ENCODE measurements at regions of chr20 and their contacts with region 1.

Region 1: GRCh38 chr20:20824924-20825584 is 112.6 kb upstream of the RALGAPA2 start:
- DNase-seq: peak; percentile 58
- ATAC-seq: peak; percentile 74
- H3K4me3 Mint-ChIP-seq: no peak overlapping the region
- H3K27ac Mint-ChIP-seq: no peak overlapping the region
- H3K4me1 Mint-ChIP-seq: peaks cover 2% of the 10 kb centered on the region
- H3K27me3 Mint-ChIP-seq: peaks cover 14% of the 10 kb centered on the region
- CTCF ChIP-seq: peak; percentile 83

Region 2: GRCh38 chr20:20582734-20583133 is 242.3 kb before region 1 on chr20:
- CTCF ChIA-PET with region 1: no interaction called
- POLR2A ChIA-PET with region 1: no interaction called
- intact Hi-C with region 1: no loop called
- DNase-seq: no peak
- ATAC-seq: no peak
- H3K4me3 Mint-ChIP-seq: no peak overlapping the region
- H3K27ac Mint-ChIP-seq: no peak overlapping the region
- H3K4me1 Mint-ChIP-seq: peaks cover 4% of the 10 kb centered on the region
- H3K27me3 Mint-ChIP-seq: no peaks in the 10 kb centered on the region
- CTCF ChIP-seq: no peak

Region 3: GRCh38 chr20:20658871-20659431 is 166.1 kb before region 1 on chr20:
- CTCF ChIA-PET with region 1: interaction called, 16 read pairs
- POLR2A ChIA-PET with region 1: no interaction called
- intact Hi-C with region 1: no loop called
- DNase-seq: no peak
- ATAC-seq: no peak
- H3K4me3 Mint-ChIP-seq: no peak overlapping the region
- H3K27ac Mint-ChIP-seq: no peak overlapping the region
- H3K4me1 Mint-ChIP-seq: no peaks in the 10 kb centered on the region
- H3K27me3 Mint-ChIP-seq: no peaks in the 10 kb centered on the region
- CTCF ChIP-seq: no peak

Region 4: GRCh38 chr20:20664795-20665589 is 160.1 kb before region 1 on chr20:
- CTCF ChIA-PET with region 1: interaction called, 16 read pairs
- POLR2A ChIA-PET with region 1: no interaction called
- intact Hi-C with region 1: loop called (anchors 5 kb)
- DNase-seq: peak; percentile 4
- ATAC-seq: peak; percentile 67
- H3K4me3 Mint-ChIP-seq: no peak overlapping the region
- H3K27ac Mint-ChIP-seq: no peak overlapping the region
- H3K4me1 Mint-ChIP-seq: peaks cover 17% of the 10 kb centered on the region
- H3K27me3 Mint-ChIP-seq: no peaks in the 10 kb centered on the region
- CTCF ChIP-seq: peak; percentile 47

Region 5: GRCh38 chr20:20759132-20759531 is 65.9 kb before region 1 on chr20:
- CTCF ChIA-PET with region 1: no interaction called
- POLR2A ChIA-PET with region 1: no interaction called
- intact Hi-C with region 1: no loop called
- DNase-seq: no peak
- ATAC-seq: no peak
- H3K4me3 Mint-ChIP-seq: no peak overlapping the region
- H3K27ac Mint-ChIP-seq: no peak overlapping the region
- H3K4me1 Mint-ChIP-seq: no peaks in the 10 kb centered on the region
- H3K27me3 Mint-ChIP-seq: peaks cover 5% of the 10 kb centered on the region
- CTCF ChIP-seq: no peak

Region 6: GRCh38 chr20:20812136-20812535 is 12.9 kb before region 1 on chr20:
- CTCF ChIA-PET with region 1: interaction called, 11 read pairs
- POLR2A ChIA-PET with region 1: no interaction called
- intact Hi-C with region 1: no loop called
- DNase-seq: no peak
- ATAC-seq: no peak
- H3K4me3 Mint-ChIP-seq: no peak overlapping the region
- H3K27ac Mint-ChIP-seq: no peak overlapping the region
- H3K4me1 Mint-ChIP-seq: no peaks in the 10 kb centered on the region
- H3K27me3 Mint-ChIP-seq: peaks cover 4% of the 10 kb centered on the region
- CTCF ChIP-seq: no peak

Region 7: DNA sequence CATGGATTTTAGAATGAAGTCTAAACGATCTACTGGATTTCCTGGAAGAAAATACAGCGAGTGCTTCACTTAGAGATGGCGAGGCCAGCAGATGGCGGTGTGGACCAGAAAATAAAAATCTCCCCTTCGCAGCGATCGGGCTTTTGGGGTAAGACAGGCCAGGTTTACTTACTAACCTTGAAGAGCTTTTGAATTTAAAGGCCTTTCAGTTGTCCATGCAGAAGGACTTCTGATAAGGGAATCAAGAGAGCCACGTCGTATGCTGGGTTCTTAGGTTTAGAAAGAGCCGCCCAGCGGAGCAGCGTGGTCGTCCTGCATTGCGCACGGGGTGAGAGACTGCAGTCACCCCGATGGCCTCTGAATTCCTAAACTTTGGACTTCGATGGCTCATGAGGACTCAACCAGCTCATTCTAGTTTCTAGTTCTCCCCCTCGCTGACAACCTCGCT is 12.5 kb after region 1 on chr20:
- CTCF ChIA-PET with region 1: interaction called, 32 read pairs
- POLR2A ChIA-PET with region 1: no interaction called
- intact Hi-C with region 1: no loop called
- DNase-seq: peak; percentile 71
- ATAC-seq: peak; percentile 42
- H3K4me3 Mint-ChIP-seq: no peak overlapping the region
- H3K27ac Mint-ChIP-seq: no peak overlapping the region
- H3K4me1 Mint-ChIP-seq: peaks cover 3% of the 10 kb centered on the region
- H3K27me3 Mint-ChIP-seq: peaks cover 7% of the 10 kb centered on the region
- CTCF ChIP-seq: peak; percentile 72